CD4-positive, alpha-beta T cell (primary cell): ENCODE measurements at regions of chr9 and their contacts with region 1.

Region 1: DNA sequence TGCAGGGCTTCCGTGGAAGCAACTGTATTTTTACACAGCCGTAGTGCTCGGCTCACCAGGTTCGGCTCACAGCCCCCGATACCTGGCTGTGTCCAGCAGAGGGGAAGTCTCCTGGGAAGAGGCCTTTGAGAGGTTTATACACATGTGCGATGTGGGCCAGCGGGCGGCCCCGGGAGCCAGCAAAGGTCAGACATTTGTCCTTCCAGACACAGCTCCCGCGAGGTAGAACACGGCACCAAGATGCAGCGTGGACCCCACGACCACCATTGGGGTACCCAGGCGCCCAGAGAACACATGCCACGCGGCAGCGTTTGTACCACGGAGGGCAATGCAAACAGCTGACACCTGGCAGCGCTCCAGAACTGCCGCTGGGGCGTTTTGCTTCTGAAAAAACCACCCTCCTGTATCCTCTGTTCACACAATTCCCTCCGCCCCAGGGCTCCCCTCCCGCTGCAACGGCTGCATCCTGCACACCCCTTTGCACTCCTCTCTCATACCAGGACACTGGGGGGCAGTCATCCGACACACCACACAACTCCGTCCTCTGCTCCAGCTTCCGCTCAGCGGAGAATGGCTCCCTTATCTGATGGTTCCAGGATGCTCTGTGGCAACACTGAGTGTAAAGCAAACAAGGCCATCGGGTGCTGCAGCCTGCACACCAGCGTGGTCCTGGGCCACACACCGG is 235.3 kb downstream of the SYK start:
- DNase-seq: peak; percentile 20 to 75 (median 44)
- ATAC-seq: peak; percentile 90
- H3K4me3 ChIP-seq: no peak overlapping the region
- H3K4me3 Mint-ChIP-seq: no peak overlapping the region
- H3K27ac ChIP-seq: no peak overlapping the region
- H3K27ac Mint-ChIP-seq: no peak overlapping the region
- H3K4me1 ChIP-seq: peaks cover 15% of the 10 kb centered on the region
- H3K4me1 Mint-ChIP-seq: peaks cover 10% of the 10 kb centered on the region
- H3K27me3 ChIP-seq: peaks cover 0 to 8% of the 10 kb centered on the region in 2 experiments
- H3K27me3 Mint-ChIP-seq: peaks cover 39% of the 10 kb centered on the region
- CTCF ChIP-seq: peak; percentile 54

Region 2: DNA sequence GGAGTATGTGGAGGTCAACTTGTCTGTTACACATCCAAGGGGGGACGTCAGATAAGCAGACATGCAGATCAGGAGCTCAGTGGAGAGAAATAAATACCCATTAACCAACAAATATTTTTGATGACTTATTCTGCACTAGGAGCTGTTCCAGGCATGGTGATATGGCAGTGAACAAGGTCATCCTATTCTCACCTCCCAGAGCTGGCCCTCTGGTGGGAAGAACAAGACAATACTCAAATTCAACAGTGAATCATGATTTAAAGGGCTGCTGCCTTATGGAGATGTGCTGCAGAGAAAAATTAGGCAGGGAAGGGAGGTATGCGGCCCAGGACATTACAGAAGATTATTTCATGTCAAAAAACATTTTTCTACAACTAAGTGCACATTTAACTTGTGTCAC is 198.9 kb before region 1 on chr9:
- CTCF ChIA-PET with region 1: no interaction called
- POLR2A ChIA-PET with region 1: no interaction called
- intact Hi-C with region 1: no loop called
- DNase-seq: no peak
- ATAC-seq: no peak
- H3K4me3 ChIP-seq: no peak overlapping the region
- H3K4me3 Mint-ChIP-seq: no peak overlapping the region
- H3K27ac ChIP-seq: no peak overlapping the region
- H3K27ac Mint-ChIP-seq: no peak overlapping the region
- H3K4me1 ChIP-seq: peaks cover 2% of the 10 kb centered on the region
- H3K4me1 Mint-ChIP-seq: no peaks in the 10 kb centered on the region
- H3K27me3 ChIP-seq: no peaks in the 10 kb centered on the region
- H3K27me3 Mint-ChIP-seq: peaks cover 4% of the 10 kb centered on the region
- CTCF ChIP-seq: no peak

Region 3: DNA sequence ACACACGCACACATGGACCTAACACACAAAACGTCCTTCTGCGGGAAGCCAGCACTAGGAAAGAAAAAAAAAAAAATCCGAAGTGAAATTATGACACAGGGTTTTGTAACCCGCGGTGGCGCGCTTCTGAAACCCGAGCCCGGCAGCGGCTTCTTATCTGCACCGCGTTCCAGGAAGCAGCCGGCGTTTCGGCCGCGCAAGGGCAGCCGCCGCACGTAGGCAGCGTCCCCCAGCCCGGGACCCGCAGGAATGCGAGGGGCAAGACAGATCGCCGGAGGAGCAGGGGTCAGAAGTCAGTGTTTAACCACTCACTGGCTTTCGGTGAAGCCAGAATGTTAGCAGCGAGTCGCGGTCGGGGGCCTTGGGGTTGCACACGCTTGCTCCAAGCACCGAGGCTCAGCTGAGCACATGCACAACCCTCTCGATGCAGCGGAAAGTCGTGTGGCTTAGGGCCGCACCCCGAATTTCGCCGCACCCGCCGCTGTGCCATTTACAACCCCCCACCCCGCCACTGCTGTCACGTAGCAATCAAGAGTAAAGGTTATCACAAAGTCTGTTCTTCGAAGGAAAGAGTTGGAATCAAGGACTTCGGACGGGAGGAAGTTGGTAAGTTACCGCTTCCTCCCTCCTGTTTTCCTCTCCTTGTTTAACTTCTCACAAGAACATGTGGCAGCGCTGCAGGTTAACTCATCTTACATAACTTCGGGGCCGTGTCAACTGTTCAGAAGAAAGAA is 156.9 kb after region 1 on chr9:
- CTCF ChIA-PET with region 1: no interaction called
- POLR2A ChIA-PET with region 1: no interaction called
- intact Hi-C with region 1: loop called in 1 of 2 experiments (anchors 5 kb)
- DNase-seq: peak; percentile 27 to 77 (median 44)
- ATAC-seq: peak; percentile 80
- H3K4me3 ChIP-seq: peak overlapping the region; percentile 55
- H3K4me3 Mint-ChIP-seq: peak overlapping the region; percentile 83
- H3K27ac ChIP-seq: peak overlapping the region; percentile 6 to 15
- H3K27ac Mint-ChIP-seq: peak overlapping the region; percentile 77
- H3K4me1 ChIP-seq: peaks cover 29% of the 10 kb centered on the region
- H3K4me1 Mint-ChIP-seq: peaks cover 30% of the 10 kb centered on the region
- H3K27me3 ChIP-seq: no peaks in the 10 kb centered on the region
- H3K27me3 Mint-ChIP-seq: no peaks in the 10 kb centered on the region
- CTCF ChIP-seq: no peak

Region 4: GRCh38 chr9:91361291-91362050 is 324.5 kb after region 1 on chr9 and contains the start of gene AUH:
- CTCF ChIA-PET with region 1: interaction called, 3 read pairs
- POLR2A ChIA-PET with region 1: no interaction called
- intact Hi-C with region 1: loop called in 1 of 2 experiments (anchors 5 kb)
- DNase-seq: peak; percentile 73 to 95 (median 82)
- ATAC-seq: peak; percentile 96
- H3K4me3 ChIP-seq: peak within 1 kb of the TSS; percentile 67
- H3K4me3 Mint-ChIP-seq: peak within 1 kb of the TSS; percentile 99
- H3K27ac ChIP-seq: peak within 1 kb of the TSS in 1 of 2 donors; percentile 58
- H3K27ac Mint-ChIP-seq: peak within 1 kb of the TSS; percentile 91
- H3K4me1 ChIP-seq: peaks cover 27% of the 10 kb centered on the region
- H3K4me1 Mint-ChIP-seq: peaks cover 51% of the 10 kb centered on the region
- H3K27me3 ChIP-seq: no peaks in the 10 kb centered on the region
- H3K27me3 Mint-ChIP-seq: no peaks in the 10 kb centered on the region
- CTCF ChIP-seq: no peak
- total RNA-seq, gene AUH: 16.2 to 17.4 TPM

Region 5: DNA sequence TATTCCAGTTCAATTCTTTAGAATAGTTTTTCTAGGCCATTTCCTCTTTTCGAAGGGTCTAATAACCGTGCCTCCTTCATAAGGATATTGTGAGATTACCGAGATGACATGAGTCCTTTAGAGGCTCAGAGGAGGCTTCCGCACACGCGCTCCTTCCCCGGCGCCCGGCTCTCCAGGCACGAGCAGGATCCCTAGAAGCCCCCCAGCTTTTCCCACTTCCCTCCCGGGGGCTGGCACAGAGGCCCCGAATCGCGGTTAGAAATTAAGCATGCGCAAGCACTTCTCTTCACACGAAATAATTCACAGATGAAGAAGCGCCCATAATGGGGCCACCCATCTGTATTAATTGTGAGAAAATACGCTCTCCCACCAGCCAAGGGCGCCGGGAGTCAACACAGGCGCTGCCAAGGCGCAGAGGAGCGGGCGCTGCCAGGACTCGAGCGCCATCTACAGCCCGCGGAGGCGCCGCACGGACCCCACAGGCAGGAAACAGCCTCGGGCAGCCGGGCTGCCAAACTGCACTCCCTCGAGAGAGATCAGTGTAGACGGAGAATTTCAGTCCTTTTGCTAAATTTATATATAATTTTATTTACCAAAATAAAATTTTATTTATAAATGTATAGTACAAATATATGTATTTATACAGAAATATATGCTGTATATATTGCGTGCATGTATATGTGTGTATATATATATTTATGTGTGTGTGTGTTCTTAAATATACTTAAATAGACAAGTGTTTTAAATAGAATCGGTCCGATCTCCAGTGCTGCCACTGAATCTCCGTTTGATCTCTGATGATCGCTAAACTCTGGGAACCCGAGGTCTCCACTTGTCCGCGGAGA is 644.7 kb after region 1 on chr9:
- CTCF ChIA-PET with region 1: no interaction called
- POLR2A ChIA-PET with region 1: no interaction called
- intact Hi-C with region 1: loop called in 1 of 2 experiments (anchors 5 kb)
- DNase-seq: peak; percentile 11 to 68 (median 40)
- ATAC-seq: peak; percentile 57
- H3K4me3 ChIP-seq: no peak overlapping the region
- H3K4me3 Mint-ChIP-seq: no peak overlapping the region
- H3K27ac ChIP-seq: no peak overlapping the region
- H3K27ac Mint-ChIP-seq: no peak overlapping the region
- H3K4me1 ChIP-seq: peaks cover 7% of the 10 kb centered on the region
- H3K4me1 Mint-ChIP-seq: peaks cover 4% of the 10 kb centered on the region
- H3K27me3 ChIP-seq: peaks cover 12 to 28% of the 10 kb centered on the region in 2 experiments
- H3K27me3 Mint-ChIP-seq: peaks cover 58% of the 10 kb centered on the region
- CTCF ChIP-seq: peak; percentile 67